ENCODE measurements at regions of chr1 and their contacts with region 1.

Region 1: GRCh38 chr1:205658943-205659581 is 21.2 kb downstream of the SLC45A3 start:
- DNase-seq: peak; percentile 82
- H3K4me3 ChIP-seq: no peak overlapping the region
- H3K27ac ChIP-seq: no peak overlapping the region
- H3K4me1 ChIP-seq: peaks cover 22% of the 10 kb centered on the region
- CTCF ChIP-seq: peak; percentile 96

Region 2: DNA sequence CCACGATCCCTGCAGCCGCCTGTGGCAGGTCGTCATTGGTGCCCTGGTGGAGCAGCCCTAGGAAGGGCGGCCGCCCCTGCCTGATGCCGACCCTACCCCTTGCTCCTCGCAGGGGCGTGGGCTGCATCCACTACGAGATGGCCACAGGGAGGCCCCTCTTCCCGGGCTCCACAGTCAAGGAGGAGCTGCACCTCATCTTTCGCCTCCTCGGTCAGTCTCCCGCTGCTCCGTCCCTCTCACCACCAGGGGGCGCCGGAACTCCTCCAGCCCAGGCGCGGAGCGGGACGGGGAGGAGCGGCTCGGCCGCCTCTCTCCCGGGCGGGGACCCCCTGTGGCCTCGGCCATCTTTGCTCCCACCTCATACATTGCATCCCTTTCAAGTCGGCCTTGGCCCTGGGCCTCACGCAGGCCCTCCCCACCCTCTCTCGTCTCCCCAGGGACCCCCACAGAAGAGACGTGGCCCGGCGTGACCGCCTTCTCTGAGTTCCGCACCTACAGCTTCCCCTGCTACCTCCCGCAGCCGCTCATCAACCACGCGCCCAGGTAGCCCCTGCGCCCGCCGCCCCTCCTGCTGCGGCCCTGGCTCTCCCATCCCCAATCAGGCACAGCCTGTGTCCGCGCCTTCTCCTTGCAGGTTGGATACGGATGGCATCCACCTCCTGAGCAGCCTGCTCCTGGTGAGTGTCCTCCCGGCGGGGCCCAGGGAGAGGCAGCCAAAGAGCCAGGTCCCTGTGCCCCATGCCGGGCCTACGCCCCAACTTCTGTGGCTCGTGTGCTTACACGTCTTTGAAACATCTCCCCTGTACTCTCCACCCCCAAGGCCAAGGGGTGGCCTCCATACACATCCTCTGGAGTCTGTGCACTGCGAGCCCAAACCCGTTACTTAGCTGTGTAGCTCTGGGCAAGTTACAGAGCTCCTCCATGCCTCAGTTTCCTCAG is 129.9 kb before region 1 on chr1:
- CTCF ChIA-PET with region 1: interaction called, 3 read pairs
- POLR2A ChIA-PET with region 1: no interaction called
- intact Hi-C with region 1: loop called (anchors 1 kb)
- DNase-seq: peak; percentile 82
- H3K4me3 ChIP-seq: peak overlapping the region; percentile 50
- H3K27ac ChIP-seq: no peak overlapping the region
- H3K4me1 ChIP-seq: no peaks in the 10 kb centered on the region
- CTCF ChIP-seq: peak; percentile 87

Region 3: GRCh38 chr1:205631727-205632373 is 27.2 kb before region 1 on chr1 and contains the start of gene ELK4:
- CTCF ChIA-PET with region 1: no interaction called
- POLR2A ChIA-PET with region 1: interaction called, 5 read pairs
- intact Hi-C with region 1: loop called (anchors 1 kb)
- DNase-seq: peak; percentile 99
- H3K4me3 ChIP-seq: peak within 1 kb of the TSS; percentile 92
- H3K27ac ChIP-seq: peak within 1 kb of the TSS; percentile 93
- H3K4me1 ChIP-seq: peaks cover 35% of the 10 kb centered on the region
- CTCF ChIP-seq: peak; percentile 78
- total RNA-seq, gene ELK4: 26.4 and 29.1 TPM in 2 replicates

Region 4: DNA sequence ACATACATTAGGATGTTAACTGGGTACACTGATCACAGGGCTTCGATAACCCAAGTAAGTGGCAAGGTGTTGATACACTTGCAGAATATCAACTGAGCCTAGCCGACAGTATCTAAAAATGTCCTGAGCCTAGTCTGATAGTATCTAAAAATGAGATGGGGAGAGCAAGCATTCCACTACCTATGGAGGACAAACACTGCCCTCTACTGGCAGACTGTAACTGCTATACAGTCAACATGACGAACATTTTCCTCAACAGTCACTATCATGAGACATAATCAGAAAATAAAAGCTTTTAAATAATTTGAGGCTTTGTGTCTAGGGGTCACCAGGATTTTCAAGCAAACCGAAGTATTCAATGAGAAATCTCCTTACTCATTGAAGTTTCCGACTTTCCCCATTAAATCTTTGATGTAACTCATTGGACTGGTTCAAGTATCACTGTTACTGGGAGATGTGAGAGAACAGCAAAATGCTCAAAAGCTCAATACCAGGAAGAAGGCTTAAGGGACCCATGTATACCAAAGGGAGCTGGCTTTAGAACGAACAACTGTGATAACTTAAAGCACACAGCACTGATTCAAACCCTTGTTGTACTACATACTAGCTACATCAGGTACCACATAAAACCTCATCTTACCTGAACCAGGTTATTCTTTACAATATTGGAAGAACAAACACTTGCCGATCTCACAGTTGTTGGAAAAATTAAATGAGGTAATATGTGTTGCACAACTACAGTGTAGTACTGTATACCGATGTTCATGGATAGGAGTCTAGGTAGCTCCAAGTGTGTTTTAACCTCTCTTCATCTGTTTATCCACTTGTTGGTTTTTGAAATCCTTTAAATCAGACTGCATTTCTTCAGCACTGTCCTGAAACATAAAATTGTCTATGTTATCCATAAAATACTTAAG is 52.3 kb after region 1 on chr1:
- CTCF ChIA-PET with region 1: interaction called, 68 read pairs
- POLR2A ChIA-PET with region 1: interaction called, 38 read pairs
- intact Hi-C with region 1: loop called (anchors 1 kb)
- DNase-seq: peak; percentile 87
- H3K4me3 ChIP-seq: no peak overlapping the region
- H3K27ac ChIP-seq: peak overlapping the region; percentile 10
- H3K4me1 ChIP-seq: peaks cover 10% of the 10 kb centered on the region
- CTCF ChIP-seq: peak; percentile 99

Region 5: GRCh38 chr1:205812878-205813754 is 154.1 kb after region 1 on chr1 and contains the start of gene SLC41A1:
- CTCF ChIA-PET with region 1: no interaction called
- POLR2A ChIA-PET with region 1: no interaction called
- intact Hi-C with region 1: no loop called
- DNase-seq: peak; percentile 89
- H3K4me3 ChIP-seq: peak within 1 kb of the TSS; percentile 86
- H3K27ac ChIP-seq: no peak within 1 kb of the TSS
- H3K4me1 ChIP-seq: peaks cover 17% of the 10 kb centered on the region
- CTCF ChIP-seq: no peak
- total RNA-seq, gene SLC41A1: 3.1 and 3.2 TPM in 2 replicates

Region 6: GRCh38 chr1:205919026-205919746 is 260.1 kb after region 1 on chr1:
- CTCF ChIA-PET with region 1: no interaction called
- POLR2A ChIA-PET with region 1: interaction called, 3 read pairs
- intact Hi-C with region 1: loop called (anchors 5 kb)
- DNase-seq: peak; percentile 69
- H3K4me3 ChIP-seq: no peak overlapping the region
- H3K27ac ChIP-seq: no peak overlapping the region
- H3K4me1 ChIP-seq: no peaks in the 10 kb centered on the region
- CTCF ChIP-seq: peak; percentile 87

Measured in OCI-LY7 (cell line).